ENCODE measurements at regions of chr16 and their contacts with region 1.

Region 1: GRCh38 chr16:29926005-29926710 is at the start of gene KCTD13:
- DNase-seq: peak; percentile 86
- H3K4me3 Mint-ChIP-seq: peak within 1 kb of the TSS; percentile 91
- H3K27ac Mint-ChIP-seq: peak within 1 kb of the TSS; percentile 88
- H3K4me1 Mint-ChIP-seq: peaks cover 32% of the 10 kb centered on the region
- H3K27me3 Mint-ChIP-seq: no peaks in the 10 kb centered on the region
- total RNA-seq, gene KCTD13: 25.8 to 29.4 TPM

Region 2: DNA sequence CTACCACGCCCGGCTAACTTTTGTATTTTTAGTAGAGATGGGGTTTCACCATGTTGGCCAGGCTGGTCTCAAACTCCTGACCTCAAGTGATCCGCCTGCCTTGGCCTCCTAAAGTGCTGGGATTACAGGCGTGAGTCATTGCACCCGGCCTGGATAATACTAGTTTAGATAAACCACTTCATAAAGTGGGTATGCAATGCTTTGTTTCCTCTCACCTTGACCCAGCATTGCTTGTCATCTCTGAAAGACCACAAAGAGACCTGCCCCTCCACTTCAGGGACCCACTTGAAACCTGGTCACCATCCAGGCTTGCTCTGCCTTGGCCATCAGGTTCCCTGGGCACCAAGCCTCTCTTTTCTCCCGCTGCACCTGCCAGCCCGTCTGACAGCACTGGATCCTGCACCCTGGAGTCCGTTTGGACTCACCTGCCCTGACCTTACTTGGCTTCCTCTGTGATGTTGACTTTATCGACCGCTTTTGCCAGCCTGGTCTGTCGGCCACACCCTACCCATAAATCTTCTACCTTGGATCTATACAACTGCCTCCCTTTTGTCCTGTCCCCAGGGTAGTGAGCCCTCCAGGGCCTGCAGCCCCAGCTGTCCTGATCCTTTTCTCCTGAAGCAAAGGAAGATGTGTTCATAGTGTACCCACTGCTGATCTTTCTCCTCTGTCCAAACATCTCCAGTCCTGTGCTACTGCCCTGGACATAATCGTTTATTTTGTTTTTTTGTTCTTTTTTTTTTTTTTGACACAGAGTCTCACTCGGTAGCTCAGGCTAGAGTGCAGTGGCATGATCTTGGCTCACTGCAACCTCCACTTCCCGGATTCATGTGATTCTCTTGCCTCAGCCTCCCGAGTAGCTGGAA is 160.8 kb before region 1 on chr16:
- CTCF ChIA-PET with region 1: no interaction called
- intact Hi-C with region 1: no loop called
- DNase-seq: no peak
- H3K4me3 Mint-ChIP-seq: no peak overlapping the region
- H3K27ac Mint-ChIP-seq: no peak overlapping the region
- H3K4me1 Mint-ChIP-seq: peaks cover 6% of the 10 kb centered on the region
- H3K27me3 Mint-ChIP-seq: no peaks in the 10 kb centered on the region

Region 3: DNA sequence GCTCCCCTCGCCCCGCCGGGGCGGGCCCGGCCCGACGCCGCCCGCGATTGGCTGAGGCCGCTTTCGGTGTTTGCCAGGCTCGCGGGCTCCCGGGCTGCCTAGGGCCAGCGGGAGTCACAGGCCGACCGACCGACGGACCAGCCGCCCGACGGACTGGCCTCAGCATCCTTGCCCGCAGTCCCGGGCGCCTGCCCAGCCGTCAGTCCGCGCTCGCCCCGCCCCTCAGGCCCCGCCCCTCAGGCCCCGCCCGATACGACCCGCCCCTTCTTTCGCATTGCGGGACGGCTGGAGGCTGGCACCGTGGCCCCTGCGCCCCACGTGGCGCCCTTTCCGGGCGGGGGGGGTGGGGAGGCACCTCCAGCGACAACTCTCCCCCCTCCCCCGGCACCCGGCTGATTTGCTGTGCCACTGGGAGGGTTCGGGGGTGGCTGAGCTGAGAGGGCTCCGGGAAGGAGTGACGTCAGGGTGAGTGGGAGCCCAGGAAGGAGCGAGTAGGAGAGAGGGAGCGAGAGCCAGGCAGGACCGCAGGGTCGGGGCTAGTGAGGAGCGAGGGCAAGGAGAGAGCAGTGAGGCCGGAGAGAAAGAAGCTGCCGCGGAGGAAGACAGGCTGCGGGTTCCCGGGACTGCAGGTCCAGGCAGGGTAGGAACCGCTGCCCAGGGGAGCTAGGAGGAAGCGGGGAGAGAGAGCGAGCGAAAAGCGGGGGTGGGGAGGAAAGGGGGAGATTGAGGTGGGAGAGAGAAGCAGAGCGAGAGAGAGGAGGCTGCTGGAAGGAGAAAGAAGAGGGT is 25.9 kb before region 1 on chr16 and contains the start of gene ASPHD1:
- CTCF ChIA-PET with region 1: no interaction called
- intact Hi-C with region 1: loop called (anchors 1 kb)
- DNase-seq: peak; percentile 62
- H3K4me3 Mint-ChIP-seq: peak within 1 kb of the TSS; percentile 75
- H3K27ac Mint-ChIP-seq: no peak within 1 kb of the TSS
- H3K4me1 Mint-ChIP-seq: peaks cover 13% of the 10 kb centered on the region
- H3K27me3 Mint-ChIP-seq: peaks cover 22% of the 10 kb centered on the region
- total RNA-seq, gene ASPHD1: 1.3 to 1.7 TPM

Region 4: DNA sequence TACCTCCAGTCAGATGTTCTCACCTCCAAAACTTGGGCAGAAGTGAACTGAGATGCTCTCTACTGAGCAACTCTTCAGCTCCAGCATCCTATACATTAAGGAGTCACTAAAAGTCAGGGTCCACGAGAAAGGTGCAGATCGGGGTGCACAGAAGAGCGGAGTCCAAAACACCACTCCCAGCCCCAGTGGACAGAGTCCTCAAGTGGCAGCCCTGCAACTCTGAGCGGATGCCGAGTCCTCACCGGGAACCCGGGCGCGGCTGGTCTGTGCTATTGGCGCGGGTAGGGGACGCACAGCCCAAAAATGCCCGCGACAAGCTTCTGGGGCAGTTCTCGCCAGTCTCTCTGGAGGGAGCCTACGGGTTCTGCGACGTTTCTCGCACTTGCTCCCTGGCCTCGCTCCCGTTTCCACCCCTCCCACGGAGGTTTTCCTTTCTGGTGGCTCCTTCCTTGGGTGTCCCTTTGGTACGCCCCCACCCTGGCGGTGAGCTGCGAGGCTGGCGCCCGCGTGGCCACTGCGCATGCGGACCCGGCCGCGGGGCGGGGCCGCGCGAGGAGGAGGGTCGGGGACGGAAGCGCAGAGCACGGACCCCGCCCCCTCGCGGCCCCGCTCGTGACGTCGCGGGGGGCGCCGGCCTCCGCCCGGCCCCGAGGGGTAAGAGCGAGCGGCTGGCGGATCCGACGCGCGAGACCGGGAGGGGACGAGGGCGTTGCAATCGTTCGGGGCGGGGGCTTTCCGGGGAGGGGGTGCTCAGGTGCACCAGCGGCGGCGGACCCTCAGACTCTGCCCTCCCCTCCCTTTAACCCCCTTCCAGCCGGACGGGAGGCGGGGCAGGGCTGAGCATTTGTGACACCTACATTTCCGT is 35.6 kb after region 1 on chr16 and contains the start of gene TMEM219:
- CTCF ChIA-PET with region 1: interaction called, 6 read pairs
- intact Hi-C with region 1: loop called (anchors 1 kb)
- DNase-seq: peak; percentile 88
- H3K4me3 Mint-ChIP-seq: peak within 1 kb of the TSS; percentile 87
- H3K27ac Mint-ChIP-seq: peak within 1 kb of the TSS; percentile 83
- H3K4me1 Mint-ChIP-seq: peaks cover 20% of the 10 kb centered on the region
- H3K27me3 Mint-ChIP-seq: no peaks in the 10 kb centered on the region
- total RNA-seq, gene TMEM219: 31.9 to 35.5 TPM

Region 5: GRCh38 chr16:29995911-29996772 is 70.0 kb after region 1 on chr16 and contains the start of gene INO80E:
- CTCF ChIA-PET with region 1: interaction called, 4 read pairs
- intact Hi-C with region 1: loop called (anchors 1 kb)
- DNase-seq: peak; percentile 100
- H3K4me3 Mint-ChIP-seq: peak within 1 kb of the TSS; percentile 98
- H3K27ac Mint-ChIP-seq: peak within 1 kb of the TSS; percentile 98
- H3K4me1 Mint-ChIP-seq: peaks cover 32% of the 10 kb centered on the region
- H3K27me3 Mint-ChIP-seq: no peaks in the 10 kb centered on the region
- total RNA-seq, gene INO80E: 62.0 to 65.4 TPM